Activated CD8-positive, alpha-beta T cell treated with anti-CD3 and anti-CD28 coated beads, Interleukin-2, amount 10 ng/mL, durations not matched to agents 7 days and 5 days (primary cell): ENCODE measurements at regions of chr13 and their contacts with region 1.

Region 1: GRCh38 chr13:79423801-79424642 is 18.0 kb upstream of the RBM26 start:
- DNase-seq: no peak
- ATAC-seq: no peak
- H3K4me3 Mint-ChIP-seq: no peak overlapping the region
- H3K27ac Mint-ChIP-seq: no peak overlapping the region
- H3K4me1 Mint-ChIP-seq: peaks cover 11% of the 10 kb centered on the region
- H3K27me3 Mint-ChIP-seq: peaks cover 1% of the 10 kb centered on the region

Region 2: DNA sequence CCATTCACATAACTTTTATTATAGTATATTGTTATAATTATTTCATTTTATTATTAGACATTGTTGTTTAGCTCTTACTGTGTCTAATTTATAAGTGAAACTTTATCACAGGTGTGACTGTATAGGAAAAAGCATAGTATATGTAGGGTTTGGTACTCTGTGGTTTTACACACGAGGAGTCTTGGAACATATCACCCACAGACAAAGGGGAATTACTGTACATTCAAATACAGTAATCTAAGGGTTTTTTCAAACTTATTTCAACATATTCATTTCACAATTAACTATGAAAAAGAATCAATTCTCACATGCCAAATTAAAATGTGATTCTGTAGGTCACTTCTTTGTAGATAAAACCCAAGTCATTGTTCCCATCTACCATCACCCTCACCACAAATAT is 63.9 kb before region 1 on chr13:
- CTCF ChIA-PET with region 1: no interaction called
- POLR2A ChIA-PET with region 1: no interaction called
- DNase-seq: no peak
- ATAC-seq: no peak
- H3K4me3 Mint-ChIP-seq: no peak overlapping the region
- H3K27ac Mint-ChIP-seq: no peak overlapping the region
- H3K4me1 Mint-ChIP-seq: peaks cover 4% of the 10 kb centered on the region
- H3K27me3 Mint-ChIP-seq: no peaks in the 10 kb centered on the region

Region 3: GRCh38 chr13:79434556-79434955 is 10.5 kb after region 1 on chr13:
- CTCF ChIA-PET with region 1: interaction called, 15 read pairs
- POLR2A ChIA-PET with region 1: no interaction called
- DNase-seq: no peak
- ATAC-seq: no peak
- H3K4me3 Mint-ChIP-seq: no peak overlapping the region
- H3K27ac Mint-ChIP-seq: no peak overlapping the region
- H3K4me1 Mint-ChIP-seq: no peaks in the 10 kb centered on the region
- H3K27me3 Mint-ChIP-seq: no peaks in the 10 kb centered on the region

Region 4: DNA sequence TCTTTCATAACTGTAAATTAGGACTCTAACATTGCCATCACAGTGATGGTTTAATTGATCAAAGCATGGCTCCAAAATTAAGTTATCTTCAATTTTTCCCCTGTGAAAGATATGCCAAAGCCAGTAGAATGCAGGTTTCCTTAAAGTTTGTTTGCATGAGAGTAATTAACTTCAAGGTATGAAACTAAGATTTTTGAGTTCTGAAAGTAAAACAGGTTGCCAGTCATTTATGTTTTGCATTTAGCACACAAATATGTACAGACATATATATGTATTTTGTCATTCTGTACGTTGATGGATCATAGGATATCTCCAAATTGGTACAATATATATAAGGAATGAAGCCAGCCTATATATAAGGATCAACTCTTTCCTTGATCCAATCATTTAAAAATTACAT is 33.4 kb after region 1 on chr13:
- CTCF ChIA-PET with region 1: interaction called, 19 read pairs
- POLR2A ChIA-PET with region 1: no interaction called
- DNase-seq: no peak
- ATAC-seq: no peak
- H3K4me3 Mint-ChIP-seq: no peak overlapping the region
- H3K27ac Mint-ChIP-seq: no peak overlapping the region
- H3K4me1 Mint-ChIP-seq: peaks cover 19% of the 10 kb centered on the region
- H3K27me3 Mint-ChIP-seq: no peaks in the 10 kb centered on the region

Region 5: GRCh38 chr13:79516595-79516994 is 92.6 kb after region 1 on chr13:
- CTCF ChIA-PET with region 1: interaction called, 20 read pairs
- POLR2A ChIA-PET with region 1: no interaction called
- DNase-seq: no peak
- ATAC-seq: no peak
- H3K4me3 Mint-ChIP-seq: no peak overlapping the region
- H3K27ac Mint-ChIP-seq: no peak overlapping the region
- H3K4me1 Mint-ChIP-seq: peaks cover 49% of the 10 kb centered on the region
- H3K27me3 Mint-ChIP-seq: no peaks in the 10 kb centered on the region

Region 6: DNA sequence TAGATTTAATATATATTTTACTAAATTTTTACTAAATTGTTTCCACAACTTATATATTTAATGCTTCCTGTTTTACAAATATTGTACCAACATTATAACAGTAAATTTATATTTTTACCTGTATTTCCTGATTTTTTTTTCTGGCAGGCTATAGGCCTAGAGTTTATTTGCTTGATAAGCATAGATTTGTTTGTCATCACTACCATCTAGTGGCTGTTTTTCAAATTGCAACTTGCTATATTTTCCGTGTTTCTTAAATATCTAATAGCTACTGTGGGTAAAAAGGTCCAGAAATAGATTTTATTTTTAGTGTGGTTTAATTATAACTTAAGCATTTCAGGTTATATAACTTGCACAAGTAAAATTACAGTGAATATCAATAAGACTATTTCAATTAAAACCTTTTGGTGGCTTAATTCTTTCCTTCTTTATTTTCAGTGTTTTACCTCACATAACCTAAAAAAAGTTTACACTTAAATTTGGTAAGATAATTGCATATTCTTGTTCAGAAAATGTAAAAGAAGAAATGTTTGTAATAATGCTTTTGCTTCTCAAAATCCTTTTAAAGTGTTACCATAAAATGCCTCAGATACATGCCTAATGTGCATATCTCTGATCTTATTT is 117.5 kb after region 1 on chr13:
- CTCF ChIA-PET with region 1: interaction called, 198 read pairs
- POLR2A ChIA-PET with region 1: interaction called, 3 read pairs
- DNase-seq: peak; percentile 30
- ATAC-seq: no peak
- H3K4me3 Mint-ChIP-seq: no peak overlapping the region
- H3K27ac Mint-ChIP-seq: no peak overlapping the region
- H3K4me1 Mint-ChIP-seq: peaks cover 3% of the 10 kb centered on the region
- H3K27me3 Mint-ChIP-seq: no peaks in the 10 kb centered on the region